Motor neuron (in vitro differentiated cells): ENCODE measurements at regions of chr10 and their contacts with region 1.

Region 1: GRCh38 chr10:76303682-76304316 is 872.4 kb downstream of the LRMDA start:
- ATAC-seq: peak; percentile 93 to 99 (median 98)
- H3K4me3 ChIP-seq: no peak overlapping the region
- H3K27ac ChIP-seq: no peak overlapping the region
- H3K4me1 ChIP-seq: peaks cover 23 to 33% of the 10 kb centered on the region in 2 donors

Region 2: DNA sequence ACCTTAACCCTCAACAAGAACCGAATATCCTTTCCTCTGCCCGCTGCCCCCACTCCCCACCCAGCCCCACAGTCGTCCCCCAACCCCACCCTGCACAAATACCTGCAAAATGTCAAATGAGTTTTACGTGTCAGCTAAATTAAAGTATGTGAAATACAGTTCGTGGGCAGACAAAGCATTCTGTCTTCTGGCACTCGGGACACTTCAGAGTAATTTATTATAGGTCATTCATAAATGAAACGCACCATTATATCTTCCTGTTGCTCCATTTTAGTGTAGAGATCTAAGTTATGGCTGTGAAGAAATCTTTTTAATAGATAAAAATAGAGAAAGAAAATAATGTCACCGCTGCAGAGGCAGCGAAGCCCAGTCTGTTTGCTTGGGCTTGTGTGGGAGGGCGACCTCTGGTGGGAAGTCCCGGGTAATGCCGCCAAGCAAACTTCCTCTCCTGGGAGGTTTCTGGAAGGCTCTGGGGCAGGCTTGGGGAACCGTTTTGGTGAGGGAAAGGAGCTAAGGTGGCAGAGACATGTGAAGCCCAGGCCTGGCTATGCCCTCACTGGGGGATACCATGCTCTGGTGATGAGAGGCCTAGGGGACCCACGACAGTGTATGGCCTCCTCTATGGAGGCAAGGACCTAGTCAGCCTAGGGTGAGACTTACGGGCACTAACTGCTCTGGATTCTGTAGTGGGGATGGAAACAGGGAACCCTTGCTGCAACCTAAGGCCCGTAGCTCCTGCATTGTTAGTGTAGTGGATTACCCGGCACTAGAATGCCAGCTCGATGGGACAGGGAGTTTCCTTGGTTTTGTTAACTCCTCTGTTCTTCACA is 267.5 kb before region 1 on chr10:
- in situ Hi-C with region 1: loop called in 1 of 9 experiments (anchors 25 kb)
- ATAC-seq: peak; percentile 46 to 93 (median 62)
- H3K4me3 ChIP-seq: peak overlapping the region in 3 of 5 donors; percentile 0 to 9 (median 9)
- H3K27ac ChIP-seq: peak overlapping the region; percentile 56 to 65
- H3K4me1 ChIP-seq: peaks cover 43% of the 10 kb centered on the region in 2 donors

Region 3: GRCh38 chr10:76086761-76087639 is 216.8 kb before region 1 on chr10:
- in situ Hi-C with region 1: loop called in 1 of 9 experiments (anchors 25 kb)
- ATAC-seq: peak; percentile 60 to 94 (median 72)
- H3K4me3 ChIP-seq: no peak overlapping the region
- H3K27ac ChIP-seq: no peak overlapping the region
- H3K4me1 ChIP-seq: peaks cover 21 to 22% of the 10 kb centered on the region in 2 donors

Region 4: GRCh38 chr10:76984559-76985443 is 681.0 kb after region 1 on chr10:
- in situ Hi-C with region 1: loop called in 1 of 9 experiments (anchors 25 kb)
- ATAC-seq: peak; percentile 82 to 97 (median 90)
- H3K4me3 ChIP-seq: no peak overlapping the region
- H3K27ac ChIP-seq: no peak overlapping the region
- H3K4me1 ChIP-seq: peaks cover 2 to 7% of the 10 kb centered on the region in 2 donors